ENCODE measurements at regions of chr15 and their contacts with region 1.

Region 1: DNA sequence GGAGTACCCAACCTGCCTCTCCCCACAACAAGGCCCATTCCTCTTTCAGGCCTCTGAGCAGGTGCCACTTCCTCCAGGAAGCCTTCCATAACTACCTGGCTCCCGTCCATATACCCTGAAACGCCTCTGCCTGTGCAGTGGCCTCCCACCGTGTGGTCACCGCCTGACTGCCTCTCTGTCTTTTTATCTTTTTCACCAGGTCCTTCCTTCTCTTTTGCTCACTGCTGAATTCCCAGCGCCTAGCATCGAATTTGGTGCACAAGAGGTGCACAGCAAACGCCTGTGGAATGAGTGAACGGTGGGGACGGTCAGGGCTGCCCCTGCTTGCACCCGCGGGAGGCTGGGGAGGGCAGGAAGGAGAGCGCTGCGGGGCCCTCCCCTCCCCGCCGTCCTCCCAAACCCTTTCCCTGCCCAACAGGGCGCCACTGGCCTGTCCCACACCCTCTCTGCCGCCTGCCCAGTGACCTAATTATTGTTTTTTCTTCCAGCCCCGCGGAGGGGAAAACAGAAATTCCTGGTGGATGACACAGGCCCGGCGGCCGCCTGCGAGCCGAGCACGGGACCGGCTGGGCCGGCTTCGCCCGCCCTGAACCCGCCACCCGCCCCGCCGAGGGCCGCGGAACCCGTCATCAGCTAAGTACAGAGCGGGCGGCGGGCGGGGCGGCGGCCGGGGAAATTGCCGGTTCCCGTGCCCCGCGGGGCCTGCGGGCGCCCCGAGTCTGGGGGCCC is 140.1 kb downstream of the SMAD6 start:
- DNase-seq: peak; percentile 94 to 98
- ATAC-seq: peak; percentile 93
- H3K4me3 ChIP-seq: peak overlapping the region; percentile 46 to 81
- H3K27ac ChIP-seq: peak overlapping the region; percentile 98
- H3K4me1 ChIP-seq: no peaks in the 10 kb centered on the region
- H3K27me3 ChIP-seq: no peaks in the 10 kb centered on the region

Region 2: DNA sequence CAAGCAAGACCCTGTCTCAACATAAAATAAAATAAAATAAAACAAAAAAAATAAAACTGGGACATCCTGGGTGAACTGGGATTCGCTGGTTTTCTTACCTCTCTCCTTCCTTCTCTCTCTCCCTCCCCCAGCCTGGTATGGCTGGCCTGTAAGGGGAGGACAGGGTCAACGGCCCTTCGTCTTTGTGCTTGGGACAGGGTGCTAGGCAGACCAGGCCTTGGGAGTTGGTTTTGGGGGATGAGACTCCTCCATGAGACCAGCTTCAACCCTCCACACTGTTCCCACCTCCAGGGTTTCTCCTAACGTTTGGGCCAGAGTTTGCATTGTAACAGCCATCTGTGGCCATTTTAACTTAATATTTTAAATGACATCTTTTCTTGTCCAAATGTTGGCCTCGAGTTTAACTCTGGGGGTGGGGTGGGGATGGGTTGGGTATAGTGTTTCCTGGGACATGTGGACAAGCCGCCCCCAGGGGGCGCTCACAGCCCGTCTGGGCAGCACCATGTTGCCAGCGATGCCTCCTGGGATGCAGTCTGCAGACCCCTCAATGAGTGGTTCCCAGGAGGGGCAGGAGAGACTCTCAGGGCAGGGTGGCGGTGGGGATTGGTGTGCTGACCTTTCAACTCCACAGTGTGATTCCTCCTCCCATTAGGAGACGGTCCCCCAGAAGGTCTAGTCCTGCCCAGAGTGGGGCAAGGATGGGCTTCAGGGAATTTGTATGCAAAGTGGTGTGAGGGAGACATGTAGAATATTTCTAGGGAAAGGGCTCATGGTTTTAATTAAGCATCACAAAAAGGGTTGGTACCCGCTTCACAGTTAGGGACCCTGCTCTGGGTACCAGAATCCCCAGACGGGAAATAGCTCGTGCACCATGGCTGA is 238.6 kb before region 1 on chr15:
- intact Hi-C with region 1: no loop called
- DNase-seq: peak; percentile 78 to 90
- ATAC-seq: peak; percentile 83
- H3K4me3 ChIP-seq: no peak overlapping the region
- H3K27ac ChIP-seq: no peak overlapping the region
- H3K4me1 ChIP-seq: no peaks in the 10 kb centered on the region
- H3K27me3 ChIP-seq: no peaks in the 10 kb centered on the region

Region 3: DNA sequence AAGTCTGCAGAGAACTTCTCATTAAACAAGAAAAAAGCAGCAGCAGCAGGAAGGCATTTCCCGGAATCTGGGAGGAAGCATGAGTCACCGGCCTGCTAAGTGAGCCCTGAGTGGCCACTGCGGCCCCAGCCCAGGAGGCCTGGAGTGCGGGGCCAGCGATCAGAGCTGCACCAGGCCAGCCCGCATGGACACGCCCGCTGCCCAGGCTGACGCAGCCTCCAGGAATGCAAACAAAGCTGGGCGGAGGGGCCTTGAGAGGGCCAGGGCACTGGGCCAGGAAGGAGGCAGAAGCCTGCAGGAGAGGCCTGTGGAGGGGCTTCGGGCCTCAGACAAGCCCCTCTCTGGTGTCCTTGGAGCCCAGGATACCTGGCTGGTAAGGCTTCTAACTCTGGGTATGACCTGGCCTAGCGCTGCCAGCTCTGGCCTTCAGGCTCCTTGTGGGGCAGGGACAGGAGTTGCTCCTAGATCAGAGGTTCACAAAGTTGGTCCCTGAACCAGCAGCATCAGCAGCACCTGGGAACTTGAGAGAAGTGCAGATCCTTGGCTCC is 38.9 kb before region 1 on chr15:
- intact Hi-C with region 1: loop called (anchors 5 kb)
- DNase-seq: peak; percentile 95 to 96
- ATAC-seq: peak; percentile 97
- H3K4me3 ChIP-seq: no peak overlapping the region
- H3K27ac ChIP-seq: peak overlapping the region in 1 of 2 donors; percentile 74
- H3K4me1 ChIP-seq: peaks cover 0 to 3% of the 10 kb centered on the region in 2 donors
- H3K27me3 ChIP-seq: no peaks in the 10 kb centered on the region

Region 4: GRCh38 chr15:67165254-67166253 is 323.4 kb after region 1 on chr15:
- intact Hi-C with region 1: no loop called
- DNase-seq: peak; percentile 83 to 90
- ATAC-seq: peak; percentile 85
- H3K4me3 ChIP-seq: no peak overlapping the region
- H3K27ac ChIP-seq: peak overlapping the region; percentile 20 to 81
- H3K4me1 ChIP-seq: peaks cover 0 to 5% of the 10 kb centered on the region in 2 donors
- H3K27me3 ChIP-seq: no peaks in the 10 kb centered on the region

Measured in aorta (tissue), 5 donors.